ENCODE measurements at regions of chr2 and their contacts with region 1.

Region 1: GRCh38 chr2:132923787-132924186 is 253.8 kb upstream of the LYPD1 start:
- DNase-seq: no peak
- H3K4me3 ChIP-seq: no peak overlapping the region
- H3K27ac ChIP-seq: no peak overlapping the region
- H3K4me1 ChIP-seq: no peaks in the 10 kb centered on the region
- H3K27me3 ChIP-seq: no peaks in the 10 kb centered on the region
- CTCF ChIP-seq: no peak
- POLR2A ChIP-seq: no peak

Region 2: DNA sequence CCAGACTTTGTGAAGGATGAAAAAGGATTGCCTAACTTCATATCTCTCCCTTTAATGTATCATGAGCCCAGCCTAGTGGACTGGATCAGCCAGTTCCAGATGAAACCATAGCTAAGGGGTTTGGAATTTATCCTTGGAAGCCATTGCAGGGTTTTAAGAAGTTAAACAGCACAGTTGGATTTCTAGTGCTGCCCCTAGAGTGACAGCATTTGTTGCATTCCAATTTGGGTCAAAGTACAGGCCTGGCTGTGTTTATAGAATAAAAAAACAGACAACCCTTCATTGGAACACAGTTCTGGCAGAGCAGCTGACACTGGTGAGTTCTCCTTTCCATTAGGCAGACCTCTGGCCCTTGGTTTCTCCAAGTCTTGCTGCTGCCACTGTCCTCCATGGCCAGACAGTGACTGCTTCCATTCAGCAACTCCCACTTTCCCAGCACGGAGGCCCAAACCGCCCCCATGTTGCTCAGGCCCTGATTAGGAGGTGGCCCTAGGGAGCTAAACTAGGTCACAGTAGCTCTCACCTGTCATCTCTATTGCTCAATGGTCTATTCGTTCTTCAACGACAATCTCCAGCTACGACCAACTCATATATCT is 499.2 kb before region 1 on chr2:
- intact Hi-C with region 1: no loop called
- DNase-seq: no peak
- H3K4me3 ChIP-seq: no peak overlapping the region
- H3K27ac ChIP-seq: no peak overlapping the region
- H3K4me1 ChIP-seq: no peaks in the 10 kb centered on the region
- H3K27me3 ChIP-seq: no peaks in the 10 kb centered on the region
- CTCF ChIP-seq: no peak
- POLR2A ChIP-seq: no peak

Region 3: GRCh38 chr2:133674433-133675331 is 750.9 kb after region 1 on chr2:
- intact Hi-C with region 1: loop called (anchors 5 kb)
- DNase-seq: peak; percentile 54 to 75
- H3K4me3 ChIP-seq: peak overlapping the region; percentile 3 to 43 (median 37)
- H3K27ac ChIP-seq: peak overlapping the region; percentile 26 to 72
- H3K4me1 ChIP-seq: peaks cover 0 to 14% of the 10 kb centered on the region in 2 donors
- H3K27me3 ChIP-seq: no peaks in the 10 kb centered on the region
- CTCF ChIP-seq: no peak
- POLR2A ChIP-seq: no peak